ENCODE measurements at regions of chr5 and their contacts with region 1.

Region 1: DNA sequence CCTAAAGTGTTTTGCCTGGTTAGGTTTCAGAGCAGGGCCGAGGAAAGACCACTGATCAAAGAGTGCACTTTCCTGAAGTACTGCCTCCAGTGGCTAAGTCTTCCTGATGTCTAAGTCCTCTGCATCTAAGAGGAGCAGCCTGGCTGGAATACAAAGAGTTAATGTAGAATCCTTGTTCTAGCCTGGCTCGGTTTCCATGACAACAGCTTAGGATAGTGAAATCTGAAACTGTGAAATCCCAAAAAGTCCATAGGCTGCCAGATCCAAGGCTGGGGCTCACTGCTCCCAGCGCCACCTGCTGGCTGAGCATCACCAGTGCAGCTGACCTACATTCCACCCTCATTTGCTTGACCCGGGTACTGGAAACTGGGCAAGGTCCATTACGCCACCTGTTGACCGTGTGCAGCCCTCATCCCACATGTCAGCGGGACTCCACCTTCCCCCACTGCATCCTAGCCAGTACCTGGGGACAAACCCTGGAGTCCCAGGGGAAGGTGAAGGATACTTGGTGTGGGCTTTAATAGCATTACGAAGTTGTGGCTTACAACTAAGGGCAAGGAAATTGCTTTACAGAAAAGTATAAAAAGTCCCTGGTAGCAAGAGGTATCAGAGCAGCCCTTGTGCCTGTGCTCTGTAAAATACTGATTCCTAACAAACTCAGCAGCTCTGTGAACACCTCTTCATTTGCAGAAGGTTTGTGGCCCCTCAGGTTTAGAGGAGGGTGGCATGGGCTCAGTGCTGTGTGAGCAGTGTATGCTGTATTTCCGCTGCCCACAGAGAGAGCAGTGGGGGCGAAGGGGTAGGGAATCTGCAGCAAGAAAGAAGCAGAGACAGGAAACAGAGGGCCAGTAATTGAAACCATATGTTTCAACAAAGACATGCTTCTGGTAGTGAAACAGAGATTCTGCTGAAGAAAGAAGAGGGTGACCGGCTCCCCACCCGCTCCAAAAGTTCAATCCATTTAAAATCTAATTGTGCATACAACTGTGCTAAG is 36.0 kb downstream of the PCDHGC5 start:
- DNase-seq: peak; percentile 83 to 97
- H3K4me3 ChIP-seq: no peak overlapping the region
- H3K27ac ChIP-seq: peak overlapping the region; percentile 41 to 76 (median 71)
- H3K4me1 ChIP-seq: peaks cover 14 to 78% (median 44%) of the 10 kb centered on the region in 4 donors
- H3K27me3 ChIP-seq: no peaks in the 10 kb centered on the region
- CTCF ChIP-seq: peak in 5 of 7 experiments; percentile 97 to 99 (median 98)
- EP300 ChIP-seq: peak; percentile 23
- POLR2A ChIP-seq: no peak

Region 2: DNA sequence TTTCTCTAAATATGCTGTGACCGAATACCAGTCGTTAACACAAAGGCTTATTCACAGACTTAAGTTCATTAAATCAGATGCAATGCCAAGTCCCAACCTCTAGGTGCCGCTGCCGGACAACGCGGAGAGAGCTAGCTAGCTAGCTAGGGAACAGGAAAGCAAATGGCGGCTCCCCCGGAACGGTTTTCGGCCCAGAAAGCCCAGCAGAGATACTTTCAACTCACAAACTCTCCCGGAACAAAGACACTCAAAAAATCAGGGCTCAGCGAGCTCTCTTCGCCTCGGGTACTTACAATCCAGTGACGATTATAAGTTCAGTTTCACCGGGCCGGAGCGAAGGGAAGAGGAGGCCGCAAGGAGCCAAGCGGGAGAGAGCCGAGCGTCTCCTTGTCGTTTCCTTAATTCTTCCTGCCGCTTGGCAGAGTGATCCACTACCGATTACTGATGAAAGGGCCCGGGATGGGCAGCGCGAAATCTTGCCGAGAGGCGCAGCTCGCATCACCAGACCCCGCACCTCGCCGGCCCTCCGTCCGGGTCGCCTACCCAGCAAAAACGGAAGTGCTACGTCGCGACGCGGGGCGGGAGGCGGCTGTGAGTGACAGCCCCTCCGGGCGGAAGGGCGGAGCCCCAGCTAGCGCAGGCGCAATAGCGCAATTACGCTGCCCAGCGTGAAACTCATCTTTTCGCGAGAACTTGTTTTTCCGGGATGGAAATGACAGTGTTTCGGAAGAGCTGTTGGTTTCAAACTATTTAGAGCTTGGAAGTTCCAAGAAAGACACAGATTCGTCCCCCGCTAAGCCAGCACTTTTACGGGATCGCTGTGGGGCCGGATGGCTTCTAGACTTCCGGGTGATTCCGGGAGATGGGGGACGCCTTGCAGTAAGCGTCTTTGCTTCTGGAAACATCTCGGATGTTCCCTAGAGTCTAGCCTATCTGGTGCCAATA is 204.4 kb before region 1 on chr5 and contains the start of gene TAF7:
- intact Hi-C with region 1: loop called (anchors 10 kb)
- DNase-seq: peak; percentile 88 to 97
- H3K4me3 ChIP-seq: peak within 1 kb of the TSS; percentile 63 to 82 (median 72)
- H3K27ac ChIP-seq: peak within 1 kb of the TSS; percentile 92 to 95 (median 93)
- H3K4me1 ChIP-seq: peaks cover 0 to 12% (median 8%) of the 10 kb centered on the region in 4 donors
- H3K27me3 ChIP-seq: no peaks in the 10 kb centered on the region
- CTCF ChIP-seq: peak in 5 of 7 experiments; percentile 60 to 77 (median 67)
- EP300 ChIP-seq: peak; percentile 35
- POLR2A ChIP-seq: peak in 2 of 4 donors; percentile 50 to 82
- total RNA-seq, gene TAF7: 22.0 to 89.8 (median 36.5) TPM

Region 3: GRCh38 chr5:141412854-141413539 is 111.9 kb before region 1 on chr5 and contains the start of gene PCDHGA10:
- intact Hi-C with region 1: loop called (anchors 10 kb)
- DNase-seq: peak; percentile 67 to 77
- H3K4me3 ChIP-seq: peak within 1 kb of the TSS; percentile 27 to 48 (median 39)
- H3K27ac ChIP-seq: no peak within 1 kb of the TSS
- H3K4me1 ChIP-seq: peaks cover 0 to 20% (median 5%) of the 10 kb centered on the region in 4 donors
- H3K27me3 ChIP-seq: peaks cover 0 to 81% (median 31%) of the 10 kb centered on the region in 3 donors
- CTCF ChIP-seq: peak in 4 of 7 experiments; percentile 22 to 46 (median 33)
- EP300 ChIP-seq: no peak
- POLR2A ChIP-seq: no peak
- total RNA-seq, gene PCDHGA10: 0.89 to 7.0 (median 4.5) TPM in 4 of 5 donors, not detected in the other

Region 4: DNA sequence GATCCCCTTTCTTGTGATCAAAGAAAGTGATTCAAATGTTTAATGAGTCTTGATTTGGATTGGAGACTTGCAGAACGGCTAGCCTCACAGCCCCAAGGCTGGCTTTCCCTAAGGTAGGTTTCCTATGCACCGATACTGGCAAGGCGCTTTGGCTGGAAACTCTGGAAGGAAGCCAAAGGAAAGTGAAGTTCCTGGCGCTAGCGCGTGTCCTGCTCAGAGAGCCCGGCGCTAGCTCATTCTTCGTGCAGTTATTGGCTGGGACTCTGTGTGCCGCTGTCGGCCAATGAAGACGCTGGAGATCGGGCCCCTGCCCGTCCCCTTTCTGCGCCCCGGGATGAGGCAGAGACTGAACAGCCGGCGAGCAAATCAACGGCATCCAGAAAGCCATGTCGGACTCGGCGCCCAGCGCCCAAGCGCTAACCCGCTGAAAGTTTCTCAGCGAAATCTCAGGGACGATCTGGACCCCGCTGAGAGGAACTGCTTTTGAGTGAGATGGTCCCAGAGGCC is 49.2 kb before region 1 on chr5 and contains the start of gene PCDHGC3:
- intact Hi-C with region 1: loop called (anchors 10 kb)
- DNase-seq: peak; percentile 88 to 96
- H3K4me3 ChIP-seq: peak within 1 kb of the TSS; percentile 58 to 70 (median 64)
- H3K27ac ChIP-seq: peak within 1 kb of the TSS; percentile 61 to 92 (median 86)
- H3K4me1 ChIP-seq: peaks cover 17 to 57% (median 49%) of the 10 kb centered on the region in 4 donors
- H3K27me3 ChIP-seq: peaks cover 0 to 41% (median 21%) of the 10 kb centered on the region in 3 donors
- CTCF ChIP-seq: peak in 2 of 7 experiments; percentile 21
- EP300 ChIP-seq: no peak
- POLR2A ChIP-seq: no peak
- total RNA-seq, gene PCDHGC3: 7.6 to 35.8 (median 18.8) TPM

Region 5: GRCh38 chr5:141848746-141849374 is 324.0 kb after region 1 on chr5:
- intact Hi-C with region 1: no loop called
- DNase-seq: peak; percentile 80 to 91
- H3K4me3 ChIP-seq: peak overlapping the region; percentile 56 to 66 (median 64)
- H3K27ac ChIP-seq: peak overlapping the region; percentile 94 to 99 (median 96)
- H3K4me1 ChIP-seq: peaks cover 45 to 67% (median 51%) of the 10 kb centered on the region in 4 donors
- H3K27me3 ChIP-seq: peaks cover 0 to 10% (median 0%) of the 10 kb centered on the region in 3 donors
- CTCF ChIP-seq: no peak
- EP300 ChIP-seq: no peak
- POLR2A ChIP-seq: no peak

Measured in stomach (tissue), 19 donors.